ENCODE measurements at regions of chr6 and their contacts with region 1.

Region 1: DNA sequence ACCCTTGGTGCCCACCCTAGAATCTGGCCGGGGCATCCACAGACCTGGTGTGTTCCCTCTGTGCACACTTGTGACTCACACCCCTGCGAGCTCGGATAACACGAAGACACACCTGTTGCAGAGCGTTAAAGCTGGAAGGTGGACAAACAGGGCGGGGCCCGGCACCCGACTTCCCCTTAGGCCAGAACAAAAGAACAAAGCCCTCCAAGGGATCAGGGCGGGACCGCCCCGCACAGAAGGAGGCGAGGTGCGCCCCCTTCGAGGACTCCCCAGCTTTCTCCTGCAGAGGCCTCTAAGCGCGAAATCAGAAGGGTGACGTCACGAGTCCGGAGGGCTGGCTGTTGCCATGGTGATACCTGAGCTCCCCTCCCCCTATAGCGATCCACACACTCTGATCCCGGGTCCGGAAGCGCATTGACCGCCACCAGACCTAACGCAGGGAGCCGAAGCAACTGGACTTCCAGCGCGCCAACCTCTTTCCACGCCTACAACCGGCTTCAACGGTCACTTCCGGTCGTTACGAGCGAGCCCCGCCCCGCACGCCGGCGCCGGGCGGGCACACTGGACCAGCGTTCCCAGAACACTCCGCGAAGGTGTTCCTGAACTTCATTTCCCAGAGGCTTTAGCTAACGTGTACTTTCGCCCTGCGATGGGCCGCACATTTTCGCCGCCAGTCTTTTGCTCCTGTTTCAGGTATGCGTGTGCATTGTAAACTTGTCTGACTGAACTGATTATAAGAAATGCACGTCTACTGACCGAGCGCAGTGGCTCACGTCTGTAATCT is at the start of gene ZNF184:
- DNase-seq: peak; percentile 74 to 88 (median 86)
- ATAC-seq: peak; percentile 88
- H3K4me3 ChIP-seq: peak within 1 kb of the TSS; percentile 85
- H3K4me3 Mint-ChIP-seq: peak within 1 kb of the TSS; percentile 85 to 98 (median 97)
- H3K27ac ChIP-seq: peak within 1 kb of the TSS; percentile 93
- H3K27ac Mint-ChIP-seq: peak within 1 kb of the TSS; percentile 90 to 99 (median 96)
- H3K4me1 ChIP-seq: peaks cover 13 to 23% of the 10 kb centered on the region in 2 donors
- H3K4me1 Mint-ChIP-seq: peaks cover 40 to 55% (median 52%) of the 10 kb centered on the region in 7 donors
- H3K27me3 ChIP-seq: no peaks in the 10 kb centered on the region
- H3K27me3 Mint-ChIP-seq: peaks cover 0 to 9% (median 0%) of the 10 kb centered on the region in 5 donors
- total RNA-seq, gene ZNF184: 9.6 to 13.7 (median 12.3) TPM

Region 2: GRCh38 chr6:26588965-26589364 is 883.8 kb before region 1 on chr6:
- CTCF ChIA-PET with region 1: no interaction called
- POLR2A ChIA-PET with region 1: no interaction called
- intact Hi-C with region 1: no loop called
- DNase-seq: no peak
- ATAC-seq: no peak
- H3K4me3 ChIP-seq: no peak overlapping the region
- H3K4me3 Mint-ChIP-seq: no peak overlapping the region
- H3K27ac ChIP-seq: no peak overlapping the region
- H3K27ac Mint-ChIP-seq: no peak overlapping the region
- H3K4me1 ChIP-seq: no peaks in the 10 kb centered on the region
- H3K4me1 Mint-ChIP-seq: peaks cover 0 to 2% (median 0%) of the 10 kb centered on the region in 7 donors
- H3K27me3 ChIP-seq: peaks cover 0 to 12% of the 10 kb centered on the region in 2 donors
- H3K27me3 Mint-ChIP-seq: peaks cover 8 to 62% (median 26%) of the 10 kb centered on the region in 5 donors

Region 3: DNA sequence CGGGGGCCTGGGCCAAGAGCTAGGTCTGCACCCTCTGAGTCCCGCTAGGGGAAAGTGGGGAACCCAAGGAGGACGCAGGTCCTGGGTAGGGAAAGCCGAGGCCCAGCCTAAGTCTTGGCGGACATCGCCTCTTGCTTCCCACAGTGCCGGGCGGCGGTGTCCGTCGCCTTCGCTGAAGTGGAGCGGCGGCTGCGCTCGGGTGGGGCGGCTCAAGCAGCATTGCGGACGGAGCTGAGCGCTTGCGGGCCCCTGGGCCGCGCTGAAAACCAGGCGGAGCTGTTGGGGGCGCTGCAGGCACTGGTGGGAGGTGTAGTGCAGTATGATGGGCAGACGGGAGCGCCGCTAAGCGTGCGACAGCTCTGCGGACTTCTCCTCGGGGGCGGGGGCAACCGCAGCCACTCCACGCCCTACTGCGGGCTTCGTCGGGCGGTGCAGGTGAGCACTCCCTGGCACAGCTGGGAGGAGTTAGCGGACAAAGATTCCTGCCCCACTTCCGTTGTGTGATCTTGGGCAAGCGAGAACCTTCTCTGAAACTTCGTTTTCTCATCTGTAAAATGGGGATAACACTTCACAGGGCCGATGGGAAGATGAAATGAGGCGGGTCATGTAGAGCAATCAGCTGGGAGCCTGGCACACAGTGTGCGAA is 221.1 kb before region 1 on chr6:
- CTCF ChIA-PET with region 1: no interaction called
- POLR2A ChIA-PET with region 1: no interaction called
- intact Hi-C with region 1: loop called in 1 of 2 experiments (anchors 1 kb)
- DNase-seq: peak; percentile 26 to 62 (median 41)
- ATAC-seq: peak; percentile 89
- H3K4me3 ChIP-seq: peak overlapping the region; percentile 51
- H3K4me3 Mint-ChIP-seq: peak overlapping the region; percentile 76 to 91 (median 83)
- H3K27ac ChIP-seq: no peak overlapping the region
- H3K27ac Mint-ChIP-seq: no peak overlapping the region
- H3K4me1 ChIP-seq: peaks cover 4 to 8% of the 10 kb centered on the region in 2 donors
- H3K4me1 Mint-ChIP-seq: peaks cover 4 to 12% (median 7%) of the 10 kb centered on the region in 7 donors
- H3K27me3 ChIP-seq: peaks cover 0 to 4% of the 10 kb centered on the region in 2 donors
- H3K27me3 Mint-ChIP-seq: peaks cover 50 to 69% (median 65%) of the 10 kb centered on the region in 5 donors

Region 4: GRCh38 chr6:27503436-27504030 is 30.7 kb after region 1 on chr6:
- CTCF ChIA-PET with region 1: no interaction called
- POLR2A ChIA-PET with region 1: interaction called, 24 read pairs
- intact Hi-C with region 1: loop called (anchors 1 kb)
- DNase-seq: peak; percentile 73 to 86 (median 80)
- ATAC-seq: peak; percentile 75
- H3K4me3 ChIP-seq: peak overlapping the region; percentile 61
- H3K4me3 Mint-ChIP-seq: peak overlapping the region; percentile 85 to 99 (median 91)
- H3K27ac ChIP-seq: peak overlapping the region; percentile 57
- H3K27ac Mint-ChIP-seq: peak overlapping the region; percentile 82 to 97 (median 91)
- H3K4me1 ChIP-seq: peaks cover 6% of the 10 kb centered on the region in 2 donors
- H3K4me1 Mint-ChIP-seq: peaks cover 15 to 41% (median 36%) of the 10 kb centered on the region in 7 donors
- H3K27me3 ChIP-seq: no peaks in the 10 kb centered on the region
- H3K27me3 Mint-ChIP-seq: peaks cover 5 to 62% (median 11%) of the 10 kb centered on the region in 5 donors

Region 5: DNA sequence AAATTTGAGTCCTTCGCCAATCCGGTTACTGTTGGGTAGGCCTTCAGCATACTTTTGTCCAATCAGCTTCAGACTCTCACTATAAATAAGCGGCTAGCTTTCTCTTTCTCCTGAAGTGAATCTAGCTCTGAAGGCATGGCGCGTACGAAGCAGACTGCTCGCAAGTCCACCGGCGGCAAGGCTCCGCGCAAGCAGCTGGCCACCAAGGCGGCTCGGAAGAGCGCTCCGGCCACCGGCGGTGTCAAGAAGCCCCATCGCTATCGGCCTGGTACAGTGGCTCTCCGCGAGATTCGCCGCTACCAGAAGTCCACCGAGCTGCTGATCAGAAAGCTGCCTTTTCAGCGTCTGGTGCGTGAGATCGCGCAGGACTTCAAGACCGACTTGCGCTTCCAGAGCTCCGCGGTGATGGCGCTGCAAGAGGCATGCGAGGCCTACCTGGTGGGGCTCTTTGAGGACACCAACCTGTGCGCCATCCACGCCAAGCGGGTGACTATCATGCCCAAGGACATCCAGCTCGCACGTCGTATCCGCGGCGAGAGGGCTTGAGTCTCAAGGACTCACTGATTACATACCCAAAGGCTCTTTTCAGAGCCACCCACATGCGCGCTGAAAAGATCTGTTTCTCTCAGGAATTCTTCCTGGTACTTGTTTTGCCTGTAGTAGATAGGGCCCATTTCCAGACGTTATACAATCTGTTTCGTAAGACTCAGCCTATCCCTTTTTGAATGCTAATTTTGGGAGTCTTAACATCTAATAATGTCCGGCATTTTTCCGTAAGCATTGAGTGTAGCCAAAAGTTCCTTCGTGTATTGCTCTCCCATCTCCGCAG is 337.3 kb after region 1 on chr6:
- CTCF ChIA-PET with region 1: no interaction called
- POLR2A ChIA-PET with region 1: interaction called, 11 read pairs
- intact Hi-C with region 1: loop called (anchors 2 to 5 kb)
- DNase-seq: peak; percentile 66 to 96 (median 92)
- ATAC-seq: peak; percentile 71
- H3K4me3 ChIP-seq: peak overlapping the region; percentile 76
- H3K4me3 Mint-ChIP-seq: peak overlapping the region; percentile 81 to 97 (median 94)
- H3K27ac ChIP-seq: peak overlapping the region; percentile 86
- H3K27ac Mint-ChIP-seq: peak overlapping the region; percentile 95 to 99 (median 98)
- H3K4me1 ChIP-seq: peaks cover 20 to 42% of the 10 kb centered on the region in 2 donors
- H3K4me1 Mint-ChIP-seq: peaks cover 18 to 82% (median 61%) of the 10 kb centered on the region in 7 donors
- H3K27me3 ChIP-seq: no peaks in the 10 kb centered on the region
- H3K27me3 Mint-ChIP-seq: peaks cover 0 to 9% (median 0%) of the 10 kb centered on the region in 5 donors

Region 6: GRCh38 chr6:28863604-28864320 is 1391.0 kb after region 1 on chr6:
- CTCF ChIA-PET with region 1: no interaction called
- POLR2A ChIA-PET with region 1: no interaction called
- intact Hi-C with region 1: loop called in 1 of 2 experiments (anchors 10 kb)
- DNase-seq: peak; percentile 60 to 93 (median 89)
- ATAC-seq: peak; percentile 64
- H3K4me3 ChIP-seq: peak overlapping the region; percentile 95
- H3K4me3 Mint-ChIP-seq: peak overlapping the region; percentile 90 to 98 (median 92)
- H3K27ac ChIP-seq: peak overlapping the region; percentile 75
- H3K27ac Mint-ChIP-seq: peak overlapping the region; percentile 89 to 100 (median 95)
- H3K4me1 ChIP-seq: peaks cover 11 to 18% of the 10 kb centered on the region in 2 donors
- H3K4me1 Mint-ChIP-seq: peaks cover 15 to 69% (median 53%) of the 10 kb centered on the region in 7 donors
- H3K27me3 ChIP-seq: no peaks in the 10 kb centered on the region
- H3K27me3 Mint-ChIP-seq: peaks cover 0 to 30% (median 4%) of the 10 kb centered on the region in 5 donors

Measured in naive thymus-derived CD4-positive, alpha-beta T cell (primary cell).